Sciatic nerve (tissue), 2 donors: ENCODE measurements at regions of chr11 and their contacts with region 1.

Region 1: GRCh38 chr11:10808553-10809372 is at the start of gene EIF4G2:
- DNase-seq: peak; percentile 98
- ATAC-seq: peak; percentile 99
- total RNA-seq, gene EIF4G2: 567 TPM

Region 2: DNA sequence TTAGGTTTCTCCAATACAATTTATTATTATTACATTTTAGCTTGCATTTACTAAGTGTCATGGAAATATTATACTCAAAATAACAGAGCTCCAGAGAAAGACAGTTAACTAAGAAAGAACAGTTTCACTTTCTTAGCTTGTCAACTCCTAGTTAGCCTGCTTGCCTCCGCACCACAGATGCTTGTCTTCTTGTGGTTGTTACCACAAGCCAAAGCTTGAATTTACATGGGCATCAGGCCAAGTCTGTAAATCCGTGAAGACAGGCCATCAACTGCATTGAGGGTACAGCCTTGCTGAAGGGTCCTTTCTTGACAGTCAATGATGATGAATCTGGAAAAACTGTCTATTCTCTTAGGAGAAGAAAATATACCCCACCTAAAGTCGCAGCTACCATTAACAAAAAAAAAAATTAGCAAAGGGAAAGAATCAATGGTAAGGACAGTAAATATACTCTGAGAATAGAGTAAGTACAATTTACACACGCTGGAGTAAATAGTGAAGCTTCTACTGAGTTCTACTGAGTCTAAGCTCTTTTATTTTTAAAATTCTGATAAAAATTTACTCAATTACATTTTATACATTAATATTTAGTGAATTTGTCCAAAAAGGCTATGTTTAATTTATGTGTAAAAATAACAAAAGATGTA is 1528.0 kb before region 1 on chr11:
- intact Hi-C with region 1: no loop called
- DNase-seq: no peak
- ATAC-seq: no peak

Region 3: DNA sequence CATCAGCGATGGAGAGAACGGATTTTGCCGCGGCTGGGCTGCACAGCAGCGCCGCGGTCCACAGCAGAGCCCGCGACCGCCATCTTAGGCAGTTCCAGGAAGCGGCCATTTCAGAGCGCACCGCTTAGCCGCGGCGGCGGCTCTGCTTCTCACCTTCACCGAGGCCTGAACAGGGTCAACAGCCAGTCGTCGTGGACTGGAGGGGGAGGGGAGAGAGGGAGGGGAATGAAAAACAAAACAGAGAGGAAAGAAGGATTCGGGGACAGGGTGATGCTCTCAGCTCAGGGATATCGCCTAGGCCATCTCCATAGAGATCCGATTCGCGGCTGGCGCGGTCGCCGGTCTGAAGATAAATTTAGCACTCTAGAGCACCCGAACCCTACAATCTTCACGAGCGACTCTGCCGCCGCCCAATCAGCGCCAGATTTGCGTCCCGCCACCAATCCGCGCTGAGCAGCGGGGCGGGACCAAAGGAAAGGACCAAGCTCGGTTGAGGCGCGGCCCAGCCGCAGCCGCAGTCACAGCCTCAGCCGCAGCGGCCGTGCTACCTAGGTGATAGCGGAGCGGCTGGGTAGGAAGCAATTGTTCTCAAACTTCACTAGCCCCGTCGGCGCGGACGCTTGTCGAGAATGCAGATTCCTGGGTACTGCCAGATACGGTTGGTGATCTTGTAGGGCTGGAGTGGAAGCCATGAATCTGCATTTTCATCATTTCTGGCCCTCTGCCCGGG is 49.1 kb after region 1 on chr11 and contains the start of gene ZBED5:
- intact Hi-C with region 1: loop called (anchors 5 kb)
- DNase-seq: peak; percentile 98
- ATAC-seq: peak; percentile 99
- total RNA-seq, gene ZBED5: 56.3 TPM